ENCODE measurements at regions of chr6 and their contacts with region 1.

Region 1: GRCh38 chr6:11496152-11497060 is 41.1 kb upstream of the TMEM170B start:
- DNase-seq: peak in 39 of 42 donors; percentile 18 to 89 (median 69)

Region 2: DNA sequence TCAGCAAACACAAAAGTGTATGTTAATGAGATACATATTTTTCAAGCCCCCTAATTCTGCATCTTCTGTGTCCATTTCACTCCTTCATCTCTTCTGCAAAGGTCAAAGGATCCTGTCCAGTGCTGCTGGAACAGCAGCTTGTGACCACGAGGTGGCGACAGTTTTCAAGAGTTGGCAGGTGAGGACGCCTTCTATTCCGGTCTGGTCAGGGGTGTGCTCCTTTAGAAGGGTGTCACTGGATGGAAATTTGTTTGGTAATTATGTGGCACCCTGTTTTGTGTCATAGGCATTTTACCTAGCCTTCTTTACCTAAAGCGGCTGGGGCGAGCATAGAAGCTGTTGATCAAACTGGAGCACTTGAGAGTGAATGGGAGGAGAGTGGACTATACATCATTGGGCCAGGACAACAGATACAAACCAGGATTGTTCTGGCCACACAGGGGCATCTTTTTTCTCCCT is 352.0 kb before region 1 on chr6:
- intact Hi-C with region 1: loop called (anchors 5 kb)
- DNase-seq: peak; percentile 46 to 94 (median 82)

Region 3: DNA sequence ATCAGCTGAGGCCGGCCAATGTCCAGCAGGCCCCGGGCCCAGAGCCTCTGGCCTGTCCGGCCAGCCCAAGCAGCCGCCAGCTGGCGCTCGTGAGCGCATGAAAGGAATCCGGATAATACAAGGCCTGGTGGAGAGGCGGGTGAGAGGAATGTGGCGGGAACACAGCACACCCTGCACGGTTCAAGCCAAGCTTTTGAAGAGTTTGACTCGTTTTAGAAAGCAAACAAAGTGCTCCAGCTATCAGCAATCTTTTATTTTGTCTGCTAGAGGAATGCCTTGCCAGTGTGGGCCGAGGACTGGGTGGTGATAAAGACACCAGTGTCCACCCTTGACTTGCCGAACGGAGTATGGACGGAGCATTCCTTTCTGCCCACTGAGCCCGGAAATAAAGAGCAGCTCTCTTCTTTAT is 254.6 kb before region 1 on chr6:
- intact Hi-C with region 1: loop called (anchors 10 kb)
- DNase-seq: peak in 41 of 42 donors; percentile 44 to 88 (median 72)